ENCODE measurements at regions of chr1 and their contacts with region 1.

Region 1: DNA sequence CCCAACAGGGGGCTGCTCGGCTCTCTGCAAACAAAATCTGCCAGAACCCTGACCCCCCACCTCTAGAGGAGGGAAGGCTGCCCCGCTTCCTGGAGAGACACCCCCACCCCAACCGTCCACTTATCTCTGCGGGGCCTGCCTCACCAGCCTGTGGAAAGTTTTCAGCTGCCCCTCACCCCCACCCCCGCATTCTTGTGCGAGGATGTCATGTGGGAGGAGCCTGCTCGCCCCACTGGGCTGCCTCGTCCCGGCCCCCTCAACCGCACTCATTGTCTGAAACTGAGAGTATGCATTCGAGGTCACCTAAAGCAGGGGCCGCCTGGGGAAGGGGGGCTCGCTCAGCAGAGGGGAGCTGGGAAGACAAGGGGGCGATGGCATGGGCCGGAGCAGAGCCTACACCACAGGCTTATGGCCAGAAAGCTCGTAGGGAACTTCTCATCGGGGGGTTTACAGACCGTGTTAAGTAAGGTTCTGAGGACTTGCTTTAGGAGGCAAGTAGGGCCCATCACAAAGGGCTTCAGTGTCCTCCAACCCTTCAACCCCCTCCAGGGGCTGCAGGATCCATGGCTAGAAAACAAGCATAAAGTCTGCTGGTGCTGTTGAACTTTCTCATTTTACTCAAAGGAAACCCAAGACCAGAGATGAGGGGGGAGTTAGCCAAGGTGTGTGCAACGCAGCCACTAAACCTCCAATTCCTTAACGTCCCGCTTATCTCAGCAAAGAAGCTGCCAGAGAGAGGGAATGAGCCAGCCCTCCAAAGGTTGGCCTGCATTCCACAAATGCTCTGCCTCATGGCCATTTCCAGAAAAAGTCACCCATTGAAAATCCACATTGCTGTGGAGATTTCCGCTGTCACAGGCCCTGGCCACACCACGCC is 9.4 kb downstream of the EPHA2 start:
- H3K4me3 ChIP-seq: peak overlapping the region; percentile 14
- H3K27ac ChIP-seq: no peak overlapping the region; the same call in 1 of the 2 replicates
- H3K4me1 ChIP-seq: peaks cover 5% of the 10 kb centered on the region; the same call in 1 of the 2 replicates
- CTCF ChIP-seq: no peak

Region 2: GRCh38 chr1:16167331-16168143 is 21.0 kb after region 1 on chr1:
- CTCF ChIA-PET with region 1: interaction called, 11 read pairs
- POLR2A ChIA-PET with region 1: interaction called, 6 read pairs
- H3K4me3 ChIP-seq: peak overlapping the region; percentile 30
- H3K27ac ChIP-seq: no peak overlapping the region
- H3K4me1 ChIP-seq: peaks cover 5% of the 10 kb centered on the region
- CTCF ChIP-seq: no peak